ENCODE measurements at regions of chr7 and their contacts with region 1.

Region 1: DNA sequence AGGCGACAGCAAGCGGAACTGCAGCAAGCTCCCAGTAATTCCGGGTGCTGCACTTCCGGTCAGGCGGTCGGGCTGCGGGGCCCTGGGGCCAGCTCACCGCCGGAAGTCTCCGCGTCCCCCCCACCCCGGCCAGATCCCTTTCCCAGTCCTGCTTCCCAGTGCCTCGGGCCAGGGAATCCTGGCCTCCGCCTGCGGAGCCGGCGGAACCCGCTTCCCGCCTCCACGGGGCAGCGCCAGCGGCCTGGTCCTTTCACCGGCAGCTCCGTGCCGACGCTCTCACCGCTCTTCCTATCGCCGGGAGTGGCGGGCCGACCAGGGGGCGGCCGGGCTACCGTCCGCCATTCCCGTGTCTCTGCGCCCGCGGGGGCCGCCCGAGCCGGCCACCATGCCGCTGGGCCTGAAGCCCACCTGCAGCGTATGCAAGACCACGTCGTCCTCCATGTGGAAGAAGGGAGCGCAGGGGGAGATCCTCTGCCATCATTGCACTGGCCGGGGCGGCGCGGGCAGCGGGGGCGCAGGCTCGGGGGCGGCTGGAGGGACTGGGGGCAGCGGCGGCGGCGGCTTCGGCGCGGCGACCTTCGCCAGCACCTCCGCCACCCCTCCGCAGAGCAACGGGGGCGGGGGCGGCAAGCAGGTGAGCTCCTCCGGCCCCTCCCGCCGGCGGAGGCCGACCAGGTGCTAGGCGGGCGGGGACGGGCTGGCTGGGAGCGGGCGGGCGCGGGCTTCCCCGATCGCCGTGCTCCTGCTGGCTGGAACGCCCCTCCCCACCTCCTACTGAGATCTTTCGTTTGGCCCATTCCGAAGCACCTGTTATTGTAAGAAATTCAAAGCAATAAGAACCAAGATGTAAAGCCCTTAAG is at the start of gene GATAD1:
- DNase-seq: peak; percentile 92 to 99 (median 94)

Region 2: DNA sequence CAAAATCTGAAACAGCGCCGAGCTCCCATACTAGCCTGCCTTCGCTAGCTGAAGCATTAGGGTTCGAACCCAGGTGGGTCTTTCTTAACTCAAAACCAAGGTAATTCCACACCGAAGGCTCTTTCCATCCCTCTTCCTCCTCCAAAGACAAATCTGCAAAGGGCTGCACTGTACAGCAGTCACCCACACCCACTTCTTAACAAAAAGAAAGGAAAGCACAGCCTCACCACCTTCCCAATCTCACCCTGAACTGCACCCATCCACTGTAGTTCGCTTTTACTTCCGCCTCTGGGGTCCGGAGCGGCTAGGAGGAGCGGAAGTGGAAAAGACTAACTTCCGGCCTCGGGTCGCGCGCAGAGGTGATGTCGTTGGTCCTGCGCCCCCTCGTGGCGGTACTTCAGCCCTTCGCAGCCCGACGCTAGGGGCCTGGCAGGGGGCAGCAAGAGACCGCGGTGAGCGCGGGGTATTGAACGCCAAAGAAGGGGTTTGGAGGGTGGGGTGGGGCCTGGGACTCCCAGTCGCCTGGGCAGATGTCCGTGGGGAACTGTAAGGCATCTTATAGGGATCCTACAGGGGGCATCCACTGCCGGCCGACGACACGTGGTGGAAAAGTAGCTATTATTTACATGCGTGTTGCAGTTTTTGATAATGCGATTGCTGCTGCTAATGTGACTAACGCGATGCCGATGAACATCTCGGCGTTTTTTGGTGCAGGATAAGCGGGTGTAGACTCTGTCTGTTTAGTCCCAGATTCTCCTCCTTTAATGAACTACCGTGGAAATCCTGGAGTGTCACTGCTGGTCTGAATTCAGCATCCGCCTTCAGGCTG is 566.9 kb before region 1 on chr7 and contains the start of gene MTERF1:
- intact Hi-C with region 1: loop called (anchors 2 kb)
- DNase-seq: peak; percentile 86 to 98 (median 94)

Region 3: DNA sequence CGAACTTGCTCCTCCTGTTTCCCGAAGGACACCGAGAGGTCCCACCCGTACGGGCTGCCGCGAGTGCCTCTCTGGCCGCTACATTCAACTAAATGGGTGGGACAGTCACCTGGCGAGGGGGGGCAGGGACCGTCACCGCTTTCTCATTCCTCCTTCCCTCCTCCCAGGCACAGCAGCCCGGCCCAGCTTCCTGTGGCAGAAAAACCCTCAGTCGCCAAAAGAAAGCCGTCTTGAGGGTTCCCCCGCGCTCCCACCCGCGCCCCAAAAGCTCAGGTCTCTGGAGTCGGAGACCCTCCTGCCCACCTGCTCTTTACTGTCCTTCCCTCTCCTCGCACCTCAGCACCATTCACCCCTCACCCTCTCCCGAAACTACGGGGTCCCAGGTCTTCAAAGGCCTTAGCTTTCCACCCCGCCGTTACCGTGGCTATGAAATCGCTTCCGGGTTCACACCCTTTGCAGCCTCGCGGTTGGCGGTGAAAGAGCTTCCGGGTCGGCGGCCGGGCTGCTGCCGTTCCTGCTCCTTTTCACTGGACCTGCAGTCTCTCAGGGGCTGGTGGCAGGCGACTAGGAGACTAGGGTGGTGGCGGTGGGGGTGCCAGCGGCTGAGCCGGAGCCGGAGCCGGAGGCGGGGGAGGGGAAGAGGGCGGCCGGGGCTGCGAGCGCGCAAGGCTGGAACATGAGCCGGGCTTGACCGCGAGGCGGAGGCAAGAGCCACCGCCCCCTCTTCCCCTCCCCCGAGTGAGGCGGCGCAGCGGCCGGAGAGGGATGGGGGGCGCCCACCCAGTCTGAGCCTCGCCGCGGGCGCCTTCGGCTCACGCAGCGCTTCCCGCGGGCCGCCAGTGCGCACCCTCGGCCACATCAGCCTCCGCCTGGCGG is 201.8 kb before region 1 on chr7 and contains the starts of genes ANKIB1 and KRIT1:
- intact Hi-C with region 1: loop called (anchors 5 kb)
- DNase-seq: peak; percentile 87 to 99 (median 92)

Region 4: DNA sequence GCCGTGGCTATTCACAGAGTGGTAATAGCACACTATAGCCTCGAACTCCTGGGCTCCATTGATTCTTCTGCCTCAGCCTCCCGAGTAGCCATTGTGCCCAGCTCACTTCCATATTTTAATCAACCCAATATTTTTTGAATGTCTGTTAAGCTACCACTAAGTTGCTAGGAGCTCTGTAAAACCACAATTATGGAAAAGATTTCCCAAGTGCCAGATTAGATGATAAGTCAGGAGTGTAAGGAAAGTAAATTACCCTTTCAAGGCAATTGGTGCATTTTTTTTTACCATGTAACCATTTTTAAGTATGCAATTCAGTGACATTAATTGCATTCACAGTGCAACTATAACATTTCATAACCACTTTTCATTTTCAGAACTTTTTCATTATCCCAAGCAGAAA is 87.8 kb before region 1 on chr7:
- intact Hi-C with region 1: no loop called
- DNase-seq: no peak

Region 5: GRCh38 chr7:92528188-92528957 is 80.8 kb after region 1 on chr7 and contains the starts of genes PEX1 and RBM48:
- intact Hi-C with region 1: loop called (anchors 2 kb)
- DNase-seq: peak; percentile 91 to 100 (median 96)